K562 (cell line): ENCODE measurements at regions of chr20 and their contacts with region 1.

Region 1: GRCh38 chr20:57089691-57090150 is 176.7 kb downstream of the BMP7 start:
- DNase-seq: peak; percentile 73 to 82 (median 78)
- ATAC-seq: peak; percentile 95
- H3K4me3 ChIP-seq: no peak overlapping the region
- H3K27ac ChIP-seq: no peak overlapping the region
- H3K4me1 ChIP-seq: peaks cover 0 to 32% of the 10 kb centered on the region in 2 experiments; a peak in 3 of 5 replicates
- H3K27me3 ChIP-seq: peaks cover 5 to 38% of the 10 kb centered on the region in 2 experiments; a peak in 4 of 5 replicates
- CTCF ChIP-seq: peak; percentile 89 to 93 (median 91)
- EP300 ChIP-seq: no peak
- POLR2A ChIP-seq: no peak
- RAD21 ChIP-seq: peak; percentile 87 to 90

Region 2: DNA sequence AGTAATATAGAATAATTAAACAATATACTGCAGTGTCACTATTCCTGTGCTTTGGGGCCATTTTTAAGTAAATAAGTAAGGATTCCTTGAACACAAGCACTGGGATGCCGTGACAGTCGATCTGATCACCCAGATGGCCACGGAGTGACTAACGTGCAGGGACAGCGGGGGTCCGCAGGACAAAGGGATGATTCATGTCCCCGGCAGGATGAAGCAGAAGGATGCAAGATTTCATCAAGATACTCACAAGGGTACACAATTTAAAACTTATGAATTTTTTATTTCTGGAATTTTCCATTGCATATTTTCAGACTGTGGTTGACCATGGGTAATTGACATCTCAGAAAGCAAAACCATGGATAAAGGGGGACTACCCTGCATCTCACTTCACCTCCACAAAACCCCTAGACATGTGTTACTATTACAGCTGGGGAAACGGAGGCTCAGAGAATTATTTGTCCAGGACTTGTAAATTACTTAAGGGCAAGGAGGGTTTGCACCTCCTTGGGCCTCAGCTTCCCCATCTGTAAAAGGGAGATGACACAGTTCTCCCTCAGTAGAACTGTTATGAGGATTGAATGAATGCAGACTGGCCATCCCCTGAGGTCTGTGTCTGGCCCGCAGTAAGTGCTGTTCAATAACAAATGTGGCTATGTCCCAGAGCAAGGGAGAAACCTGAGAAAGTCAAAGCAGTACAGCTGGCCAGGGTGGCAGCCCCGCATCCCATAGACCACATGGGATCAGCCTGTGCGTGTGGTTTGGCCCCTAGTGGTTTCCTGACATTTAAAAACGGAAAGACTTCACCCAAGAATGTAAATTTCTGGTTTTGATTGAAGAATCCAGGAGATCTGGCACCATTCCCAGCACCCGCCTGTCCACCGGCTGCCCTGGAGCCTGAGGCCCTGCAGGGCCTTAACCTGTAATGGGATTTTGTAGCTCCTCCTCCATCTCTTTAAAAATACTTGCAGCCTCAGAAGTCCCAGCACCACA is 58.8 kb before region 1 on chr20:
- CTCF ChIA-PET with region 1: no interaction called
- POLR2A ChIA-PET with region 1: no interaction called
- in situ Hi-C with region 1: no loop called
- intact Hi-C with region 1: no loop called
- DNase-seq: no peak
- ATAC-seq: no peak
- H3K4me3 ChIP-seq: no peak overlapping the region
- H3K27ac ChIP-seq: no peak overlapping the region
- H3K4me1 ChIP-seq: no peaks in the 10 kb centered on the region
- H3K27me3 ChIP-seq: peaks cover 3 to 28% of the 10 kb centered on the region in 2 experiments; a peak in 4 of 5 replicates
- CTCF ChIP-seq: no peak
- EP300 ChIP-seq: no peak
- POLR2A ChIP-seq: no peak
- RAD21 ChIP-seq: no peak

Region 3: GRCh38 chr20:57108218-57108617 is 18.5 kb after region 1 on chr20:
- CTCF ChIA-PET with region 1: no interaction called
- POLR2A ChIA-PET with region 1: no interaction called
- in situ Hi-C with region 1: no loop called
- intact Hi-C with region 1: no loop called
- DNase-seq: no peak
- ATAC-seq: no peak
- H3K4me3 ChIP-seq: no peak overlapping the region
- H3K27ac ChIP-seq: no peak overlapping the region
- H3K4me1 ChIP-seq: peaks cover 7 to 14% of the 10 kb centered on the region in 2 experiments; a peak in 4 of 5 replicates
- H3K27me3 ChIP-seq: peaks cover 9 to 12% of the 10 kb centered on the region in 2 experiments; a peak in 3 of 5 replicates
- CTCF ChIP-seq: no peak
- EP300 ChIP-seq: no peak
- POLR2A ChIP-seq: no peak
- RAD21 ChIP-seq: no peak

Region 4: DNA sequence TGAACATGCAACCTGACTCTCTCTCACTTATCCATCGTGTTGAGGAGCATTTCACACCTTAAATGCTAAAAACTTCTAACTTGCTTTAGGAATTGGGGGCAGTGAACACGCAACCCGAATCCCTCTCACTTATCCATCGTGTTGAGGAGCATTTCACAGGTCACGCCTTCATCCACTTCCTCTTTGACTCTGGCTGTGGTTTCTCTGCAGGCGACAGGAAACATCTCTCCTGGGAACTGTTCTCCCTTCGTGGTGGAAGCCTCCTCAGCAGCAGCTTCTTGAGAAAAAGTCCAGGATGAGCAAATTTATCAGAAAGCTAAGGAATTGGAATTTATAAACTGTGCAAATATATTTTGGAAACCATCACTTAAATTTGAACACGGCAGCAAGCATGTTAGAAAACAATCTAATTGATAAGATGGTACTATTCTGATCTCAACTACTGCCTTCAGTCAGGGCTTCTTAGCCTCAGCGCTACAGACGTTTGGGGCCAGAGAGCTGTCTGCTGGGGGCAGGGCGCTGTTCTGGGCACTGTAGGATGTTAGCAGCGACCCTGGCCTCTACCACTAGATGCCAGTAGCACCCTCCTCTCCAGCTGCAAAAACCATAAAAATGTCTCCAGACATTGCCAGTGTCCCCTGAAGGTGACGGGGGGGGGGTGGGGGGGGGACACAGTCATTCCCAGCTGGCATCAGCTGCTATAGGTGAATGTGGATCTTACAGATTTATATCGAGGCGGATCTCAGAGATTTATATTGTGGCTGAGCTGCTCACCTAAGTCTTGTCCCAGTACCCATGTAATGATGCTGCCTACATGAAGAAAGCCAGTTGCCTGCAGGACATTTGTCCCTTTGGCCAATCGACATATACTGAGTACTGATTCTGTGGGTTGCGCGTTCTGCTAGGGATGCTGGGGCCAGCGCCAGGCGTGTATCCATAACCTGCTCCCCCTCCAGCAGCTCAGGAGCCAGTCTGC is 409.0 kb after region 1 on chr20:
- CTCF ChIA-PET with region 1: interaction called, 4 read pairs
- POLR2A ChIA-PET with region 1: no interaction called
- in situ Hi-C with region 1: loop called (anchors 10 kb)
- intact Hi-C with region 1: loop called (anchors 5 kb)
- DNase-seq: no peak
- ATAC-seq: peak; percentile 32; the same call in 2 of the 3 replicates
- H3K4me3 ChIP-seq: no peak overlapping the region
- H3K27ac ChIP-seq: no peak overlapping the region
- H3K4me1 ChIP-seq: peaks cover 3% of the 10 kb centered on the region in 2 experiments; a peak in 2 of 5 replicates
- H3K27me3 ChIP-seq: no peaks in the 10 kb centered on the region
- CTCF ChIP-seq: peak in 2 of 3 experiments; percentile 23 to 25; a peak in 3 of 6 replicates
- EP300 ChIP-seq: no peak
- POLR2A ChIP-seq: no peak
- RAD21 ChIP-seq: 0 out of 4 replicates have a peak, but pooled peaks of 1 of the 2 experiments have one; percentile 2